ENCODE measurements at regions of chr2 and their contacts with region 1.

Region 1: GRCh38 chr2:103419506-103419905 is 657.7 kb downstream of the TMEM182 start:
- DNase-seq: no peak
- H3K4me3 ChIP-seq: no peak overlapping the region
- H3K27ac ChIP-seq: no peak overlapping the region
- H3K4me1 ChIP-seq: no peaks in the 10 kb centered on the region
- H3K27me3 ChIP-seq: no peaks in the 10 kb centered on the region
- CTCF ChIP-seq: no peak

Region 2: DNA sequence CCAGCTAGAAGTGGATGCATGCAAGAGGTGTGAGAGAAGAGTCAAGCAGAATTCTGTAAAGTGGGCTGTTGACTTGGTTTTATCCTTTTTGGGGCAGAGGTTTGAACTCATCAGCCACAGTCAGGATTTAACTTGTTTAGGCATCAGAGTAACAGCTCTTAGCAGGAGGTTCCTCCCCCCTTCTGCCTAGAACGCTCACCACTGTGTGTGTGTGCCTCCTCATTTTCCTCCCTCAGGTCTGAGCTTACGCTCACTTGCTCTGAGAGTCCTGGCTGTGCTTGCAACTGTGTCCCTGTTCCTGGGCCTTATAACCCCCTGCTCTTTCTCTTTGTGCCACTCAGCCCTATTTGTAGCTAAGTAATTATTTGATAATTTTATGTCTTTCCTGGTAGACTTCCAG is 489.8 kb before region 1 on chr2:
- CTCF ChIA-PET with region 1: no interaction called
- POLR2A ChIA-PET with region 1: interaction called, 16 read pairs
- intact Hi-C with region 1: no loop called
- DNase-seq: no peak
- H3K4me3 ChIP-seq: no peak overlapping the region
- H3K27ac ChIP-seq: no peak overlapping the region
- H3K4me1 ChIP-seq: no peaks in the 10 kb centered on the region
- H3K27me3 ChIP-seq: no peaks in the 10 kb centered on the region
- CTCF ChIP-seq: no peak

Measured in A673 (cell line).